Motor neuron (in vitro differentiated cells): ENCODE measurements at regions of chr3 and their contacts with region 1.

Region 1: DNA sequence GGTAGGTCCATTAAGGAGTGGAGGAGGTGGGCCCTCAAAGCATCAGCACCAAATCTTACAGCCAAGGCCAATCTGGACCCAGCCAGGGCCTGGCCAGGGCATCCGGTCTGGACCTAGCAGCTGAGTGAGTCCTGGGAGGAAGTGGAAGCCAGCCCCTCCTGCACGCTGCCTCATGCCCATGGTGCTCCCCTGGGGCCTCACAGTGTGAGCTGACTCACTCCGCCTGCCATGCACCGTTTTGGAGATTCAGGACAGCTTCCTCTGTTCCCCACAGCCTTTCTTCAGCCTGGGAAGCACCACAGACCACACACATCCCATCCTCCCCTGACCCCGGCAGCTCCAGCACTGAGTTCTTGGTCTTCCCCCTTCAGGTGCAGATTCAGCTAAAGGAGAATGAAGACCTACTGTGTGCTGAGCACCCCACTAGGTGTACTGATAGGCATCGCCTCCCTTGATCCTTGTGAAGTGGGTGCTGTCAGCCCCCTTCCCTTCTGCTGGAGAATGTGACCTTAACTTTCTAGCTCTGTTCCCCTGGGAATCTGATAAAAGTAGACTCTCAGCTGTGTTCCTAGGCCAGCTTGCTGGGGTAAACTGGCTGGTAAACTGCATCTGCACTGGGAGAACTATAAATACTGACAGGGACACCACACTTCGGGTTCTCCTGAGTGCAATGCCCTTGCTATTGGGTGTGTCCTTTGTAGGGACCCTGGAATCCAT is 36.8 kb upstream of the SEC13 start:
- ATAC-seq: peak in 7 of 8 experiments; percentile 88 to 96 (median 93)
- H3K4me3 ChIP-seq: no peak overlapping the region
- H3K27ac ChIP-seq: no peak overlapping the region
- H3K4me1 ChIP-seq: no peaks in the 10 kb centered on the region

Region 2: GRCh38 chr3:10722911-10723310 is 365.2 kb after region 1 on chr3:
- in situ Hi-C with region 1: loop called in 3 of 9 experiments (anchors 10 to 25 kb)
- ATAC-seq: no peak
- H3K4me3 ChIP-seq: no peak overlapping the region
- H3K27ac ChIP-seq: no peak overlapping the region
- H3K4me1 ChIP-seq: no peaks in the 10 kb centered on the region